ENCODE measurements at regions of chr1 and their contacts with region 1.

Region 1: DNA sequence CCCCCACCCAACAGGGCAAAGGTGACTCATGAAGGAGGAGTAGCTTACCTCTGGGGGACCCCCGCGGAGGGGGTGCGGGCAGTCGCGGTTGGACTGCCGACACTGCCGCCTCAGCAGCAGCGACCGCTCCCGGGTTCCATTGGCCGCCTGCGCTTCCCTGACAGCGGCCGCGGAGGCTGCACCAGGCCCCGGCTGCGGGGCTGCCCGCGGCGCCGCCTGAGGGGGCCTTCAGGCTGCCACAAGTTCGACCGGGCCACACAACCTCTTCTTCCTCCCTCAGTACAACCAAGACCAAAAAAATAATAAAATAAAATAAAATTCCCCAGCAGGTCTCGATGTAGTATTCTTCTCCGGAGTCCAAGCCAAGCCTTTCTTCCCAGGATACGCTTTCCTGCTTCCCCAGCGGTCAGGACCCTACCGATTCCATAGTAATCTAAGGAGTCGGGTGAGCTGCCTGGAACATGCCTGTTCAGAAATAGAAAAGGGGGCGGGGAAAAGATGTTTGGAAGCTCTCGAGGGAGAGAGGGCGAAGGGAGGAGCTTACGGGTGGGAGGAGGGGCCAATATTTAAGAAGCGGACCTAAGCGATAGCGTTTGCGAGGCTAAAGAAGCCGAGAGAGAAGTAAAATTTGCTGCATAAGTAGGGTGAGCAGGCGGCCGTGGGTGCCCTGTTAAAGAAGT is at the start of gene PI4KB:
- DNase-seq: peak; percentile 95
- H3K4me3 Mint-ChIP-seq: peak within 1 kb of the TSS; percentile 97
- H3K27ac Mint-ChIP-seq: peak within 1 kb of the TSS; percentile 99
- H3K4me1 Mint-ChIP-seq: peaks cover 35% of the 10 kb centered on the region
- H3K27me3 Mint-ChIP-seq: no peaks in the 10 kb centered on the region
- total RNA-seq, gene PI4KB: 62.8 to 69.5 TPM

Region 2: DNA sequence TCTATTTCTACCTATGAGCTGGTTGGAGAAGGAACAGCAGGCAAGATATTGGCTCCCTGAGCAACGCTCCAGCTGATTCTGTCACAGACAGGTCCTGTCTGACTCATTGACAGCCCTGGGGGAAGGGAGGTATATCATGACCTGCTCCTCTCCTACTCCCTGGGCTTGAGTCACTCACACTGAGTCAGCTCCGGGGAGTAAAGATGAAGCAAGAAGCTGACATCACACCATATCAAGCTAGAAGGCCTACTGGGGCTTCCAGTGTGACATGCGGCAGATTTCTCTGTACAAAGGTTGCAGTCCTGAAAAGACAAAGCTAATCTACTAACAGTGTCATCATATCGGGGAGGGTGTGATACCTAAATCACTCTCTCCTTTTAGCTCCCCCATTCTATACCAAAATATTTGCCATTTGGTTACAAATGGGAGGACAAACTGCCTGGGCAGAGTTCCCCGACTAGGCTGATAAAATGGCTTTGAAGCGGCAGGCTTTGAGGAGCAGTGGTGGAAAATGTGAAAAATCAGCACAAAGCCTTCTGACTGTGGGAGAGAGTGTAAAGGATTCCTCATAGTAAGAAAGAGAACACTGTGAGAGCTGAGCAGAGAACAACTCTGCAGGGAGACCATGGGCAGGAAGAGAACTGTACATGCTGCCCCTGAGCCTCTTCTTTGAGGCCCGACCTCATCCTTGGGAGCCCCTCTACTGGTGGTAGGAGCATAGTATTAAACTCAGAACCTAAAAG is 15.6 kb before region 1 on chr1:
- CTCF ChIA-PET with region 1: interaction called, 50 read pairs
- POLR2A ChIA-PET with region 1: interaction called, 3 read pairs
- DNase-seq: peak; percentile 45
- H3K4me3 Mint-ChIP-seq: no peak overlapping the region
- H3K27ac Mint-ChIP-seq: peak overlapping the region; percentile 7
- H3K4me1 Mint-ChIP-seq: peaks cover 23% of the 10 kb centered on the region
- H3K27me3 Mint-ChIP-seq: no peaks in the 10 kb centered on the region

Region 3: DNA sequence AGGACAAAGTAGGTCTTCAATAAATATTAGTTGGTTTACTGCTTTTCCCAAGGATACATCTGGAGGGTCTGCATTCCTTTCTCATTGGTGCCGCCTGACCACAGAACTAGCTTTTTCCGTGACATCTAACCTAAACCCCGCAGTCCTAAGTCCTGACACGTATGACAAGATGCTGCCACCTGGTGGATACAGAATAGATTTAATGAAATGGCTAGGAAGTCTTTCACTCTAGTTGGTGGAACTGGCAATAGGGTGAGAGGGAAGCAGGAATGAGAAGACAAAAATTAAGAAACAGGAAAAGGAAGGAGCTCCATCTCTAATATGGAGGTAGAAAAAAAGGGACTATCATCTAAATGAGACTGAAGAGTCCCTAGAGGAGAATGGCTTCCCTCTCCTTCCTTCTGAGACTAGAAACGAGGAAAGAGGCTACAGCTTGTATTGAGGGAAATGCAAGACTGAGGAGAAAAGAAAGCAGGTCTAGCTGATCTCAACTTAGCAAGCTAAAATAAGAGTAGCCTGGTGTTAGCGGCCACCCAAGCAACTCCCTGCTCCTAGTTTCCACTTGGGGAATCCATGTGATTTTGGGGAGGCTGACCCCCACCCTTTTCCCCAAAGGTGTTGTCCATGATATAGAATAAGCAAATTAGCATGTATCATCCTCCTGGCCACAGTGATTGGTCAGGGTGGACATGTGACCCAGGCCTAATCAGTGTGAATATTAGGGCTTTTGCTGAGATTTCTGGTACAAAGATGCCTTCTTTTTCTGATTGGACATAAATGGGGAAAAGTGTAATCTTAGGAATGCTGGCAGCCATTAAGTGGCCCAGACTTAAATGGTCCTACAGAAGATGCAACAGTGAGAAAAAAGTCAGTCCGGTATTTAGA is 13.7 kb after region 1 on chr1:
- CTCF ChIA-PET with region 1: interaction called, 42 read pairs
- POLR2A ChIA-PET with region 1: interaction called, 3 read pairs
- DNase-seq: peak; percentile 70
- H3K4me3 Mint-ChIP-seq: no peak overlapping the region
- H3K27ac Mint-ChIP-seq: no peak overlapping the region
- H3K4me1 Mint-ChIP-seq: peaks cover 27% of the 10 kb centered on the region
- H3K27me3 Mint-ChIP-seq: no peaks in the 10 kb centered on the region

Region 4: GRCh38 chr1:151405167-151405951 is 78.0 kb after region 1 on chr1:
- CTCF ChIA-PET with region 1: no interaction called
- POLR2A ChIA-PET with region 1: no interaction called
- DNase-seq: no peak
- H3K4me3 Mint-ChIP-seq: no peak overlapping the region
- H3K27ac Mint-ChIP-seq: no peak overlapping the region
- H3K4me1 Mint-ChIP-seq: peaks cover 17% of the 10 kb centered on the region
- H3K27me3 Mint-ChIP-seq: no peaks in the 10 kb centered on the region

Region 5: GRCh38 chr1:151526735-151527525 is 199.6 kb after region 1 on chr1:
- CTCF ChIA-PET with region 1: no interaction called
- POLR2A ChIA-PET with region 1: no interaction called
- DNase-seq: no peak
- H3K4me3 Mint-ChIP-seq: no peak overlapping the region
- H3K27ac Mint-ChIP-seq: no peak overlapping the region
- H3K4me1 Mint-ChIP-seq: no peaks in the 10 kb centered on the region
- H3K27me3 Mint-ChIP-seq: no peaks in the 10 kb centered on the region

Region 6: DNA sequence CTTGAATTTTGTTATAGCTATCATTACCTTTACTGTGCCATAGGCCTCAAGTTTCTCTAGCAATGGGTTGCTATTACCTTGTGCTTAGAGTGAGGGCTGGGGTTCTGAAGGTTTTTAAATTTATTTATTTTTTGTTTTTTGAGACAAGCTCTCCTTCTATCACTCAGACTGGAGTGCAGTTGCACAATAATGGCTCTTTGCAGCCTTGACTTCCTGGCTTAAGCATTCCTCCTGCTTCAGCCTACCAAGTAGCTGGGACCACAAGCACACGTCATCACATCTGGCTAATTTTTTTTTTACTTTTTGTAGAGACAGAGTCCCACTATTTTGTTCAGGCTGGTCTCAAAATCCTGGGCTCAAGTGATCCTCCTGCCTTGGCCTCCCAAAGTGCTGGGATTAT is 326.0 kb after region 1 on chr1:
- CTCF ChIA-PET with region 1: no interaction called
- POLR2A ChIA-PET with region 1: no interaction called
- DNase-seq: no peak
- H3K4me3 Mint-ChIP-seq: no peak overlapping the region
- H3K27ac Mint-ChIP-seq: peak overlapping the region; percentile 5
- H3K4me1 Mint-ChIP-seq: peaks cover 18% of the 10 kb centered on the region
- H3K27me3 Mint-ChIP-seq: no peaks in the 10 kb centered on the region

Measured in activated CD4-positive, alpha-beta T cell treated with anti-CD3 and anti-CD28 coated beads, Interleukin-2, amount 10 ng/mL, durations not matched to agents 7 days and 5 days (primary cell).